ENCODE measurements at regions of chr4 and their contacts with region 1.

Region 1: DNA sequence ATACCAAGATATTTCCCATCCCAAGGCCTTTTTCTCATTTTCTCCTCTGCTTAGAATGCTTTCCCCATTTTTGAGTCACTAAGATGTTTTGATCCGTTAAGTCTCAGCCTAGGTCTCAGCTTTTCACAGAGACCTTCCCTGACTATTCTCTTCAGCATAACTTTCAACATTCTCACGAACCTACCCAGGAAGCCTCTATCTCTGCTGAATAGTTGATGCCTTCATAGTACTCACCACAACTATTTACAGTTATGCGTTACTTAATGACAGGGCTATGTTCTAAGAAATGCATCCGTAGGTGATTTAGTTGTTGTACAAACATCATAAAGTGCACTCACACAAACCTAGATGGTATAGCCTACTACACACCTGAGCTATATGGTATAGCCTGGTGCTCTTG is 64.5 kb downstream of the ARL9 start:
- DNase-seq: no peak
- ATAC-seq: no peak
- H3K4me3 ChIP-seq: no peak overlapping the region
- H3K27ac ChIP-seq: no peak overlapping the region
- H3K4me1 ChIP-seq: no peaks in the 10 kb centered on the region
- H3K27me3 ChIP-seq: no peaks in the 10 kb centered on the region
- CTCF ChIP-seq: no peak

Region 2: GRCh38 chr4:56681158-56681852 is 111.3 kb after region 1 on chr4 and contains the start of gene HOPX:
- intact Hi-C with region 1: no loop called
- DNase-seq: peak; percentile 86
- ATAC-seq: peak; percentile 90
- H3K4me3 ChIP-seq: peak within 1 kb of the TSS; percentile 40
- H3K27ac ChIP-seq: peak within 1 kb of the TSS; percentile 76
- H3K4me1 ChIP-seq: peaks cover 7% of the 10 kb centered on the region
- H3K27me3 ChIP-seq: no peaks in the 10 kb centered on the region
- CTCF ChIP-seq: no peak
- total RNA-seq, gene HOPX: 520 TPM

Region 3: DNA sequence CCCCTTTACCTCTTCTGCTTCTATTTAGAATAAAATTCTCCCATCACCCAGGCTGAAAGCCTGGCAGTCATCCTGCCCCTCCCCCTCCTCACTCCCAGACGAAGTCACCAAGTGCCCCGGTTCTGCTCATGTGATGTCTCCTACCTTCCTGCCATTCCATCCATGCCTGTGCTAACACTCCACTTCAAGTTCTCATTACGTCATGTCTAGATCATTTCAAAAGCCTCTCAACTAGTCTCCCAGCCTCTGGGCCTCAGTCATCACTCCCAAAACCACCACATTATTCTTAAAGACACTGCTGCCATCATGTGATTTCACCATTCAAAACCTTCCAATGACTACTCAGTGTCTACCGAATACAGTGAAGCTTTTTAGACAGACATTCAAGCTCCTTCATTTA is 128.3 kb after region 1 on chr4:
- intact Hi-C with region 1: no loop called
- DNase-seq: peak; percentile 78
- ATAC-seq: peak; percentile 94
- H3K4me3 ChIP-seq: no peak overlapping the region
- H3K27ac ChIP-seq: peak overlapping the region; percentile 24
- H3K4me1 ChIP-seq: peaks cover 4% of the 10 kb centered on the region
- H3K27me3 ChIP-seq: no peaks in the 10 kb centered on the region
- CTCF ChIP-seq: no peak

Region 4: GRCh38 chr4:56799824-56800756 is 230.0 kb after region 1 on chr4:
- intact Hi-C with region 1: loop called (anchors 10 kb)
- DNase-seq: peak; percentile 89
- ATAC-seq: peak; percentile 99
- H3K4me3 ChIP-seq: peak overlapping the region; percentile 59
- H3K27ac ChIP-seq: peak overlapping the region; percentile 75
- H3K4me1 ChIP-seq: peaks cover 3% of the 10 kb centered on the region
- H3K27me3 ChIP-seq: no peaks in the 10 kb centered on the region
- CTCF ChIP-seq: peak; percentile 90